Left cardiac atrium (tissue), 4 donors: ENCODE measurements at regions of chr7 and their contacts with region 1.

Region 1: GRCh38 chr7:92833024-92833765 is 3.2 kb downstream of the CDK6 start:
- DNase-seq: peak; percentile 89
- ATAC-seq: peak; percentile 74 to 81

Region 2: DNA sequence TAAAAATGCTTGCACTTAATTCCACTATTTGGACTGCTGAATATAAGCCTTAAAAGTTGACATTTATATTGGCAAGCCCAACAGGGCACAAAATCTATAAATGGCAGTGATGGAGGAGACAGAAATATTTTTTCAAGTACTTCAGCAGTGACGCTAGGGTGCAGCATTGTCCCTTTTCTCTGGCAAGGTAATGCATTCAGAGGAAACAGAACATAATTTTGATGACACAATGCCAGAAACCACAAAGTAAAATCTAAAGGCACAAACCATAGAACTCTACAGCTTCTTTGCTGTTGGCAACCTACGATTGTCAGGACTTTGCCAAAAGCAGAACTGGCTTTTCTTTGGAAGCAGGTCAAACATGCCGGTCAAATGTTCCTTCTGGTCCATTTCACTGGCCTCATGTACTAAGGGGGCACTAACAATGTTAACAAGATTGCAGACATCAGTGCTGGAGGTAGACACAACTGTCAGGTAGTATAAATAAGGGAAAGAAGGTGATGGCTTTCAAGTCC is 212.1 kb before region 1 on chr7:
- intact Hi-C with region 1: loop called (anchors 1 to 5 kb)
- DNase-seq: peak; percentile 71
- ATAC-seq: peak; percentile 86 to 91

Region 3: DNA sequence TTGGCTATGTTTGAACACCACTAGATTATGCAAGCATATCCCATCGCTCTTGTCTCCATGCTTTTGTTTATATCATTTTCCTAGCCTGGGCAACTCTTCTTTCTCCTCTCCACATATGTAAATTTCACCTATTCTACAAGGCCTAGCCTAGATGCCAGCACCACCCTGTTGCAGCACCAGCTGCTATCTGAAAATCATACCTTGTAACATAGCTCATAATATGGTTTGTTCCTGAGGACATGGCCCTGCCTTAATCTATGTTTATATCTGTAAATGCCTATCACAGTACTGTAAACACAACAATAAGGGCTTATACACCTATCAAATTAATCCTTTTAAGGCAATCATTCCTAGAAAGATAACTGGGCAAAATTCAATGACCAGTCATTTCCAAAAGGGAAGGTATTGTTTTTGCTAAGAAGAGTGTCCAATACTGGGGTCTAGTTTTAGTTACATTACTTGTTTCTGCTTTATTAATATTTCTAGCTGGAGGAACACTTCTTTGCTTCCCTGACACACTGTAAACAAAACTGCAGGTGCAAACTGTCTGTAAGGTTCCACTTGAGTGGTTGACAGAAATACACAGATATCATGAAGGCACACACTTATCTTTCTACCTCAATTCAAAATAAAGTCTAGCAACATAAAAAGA is 158.9 kb before region 1 on chr7:
- intact Hi-C with region 1: no loop called
- DNase-seq: no peak
- ATAC-seq: no peak

Region 4: GRCh38 chr7:92691578-92691977 is 141.6 kb before region 1 on chr7:
- intact Hi-C with region 1: loop called (anchors 2 to 10 kb)
- DNase-seq: no peak
- ATAC-seq: no peak

Region 5: DNA sequence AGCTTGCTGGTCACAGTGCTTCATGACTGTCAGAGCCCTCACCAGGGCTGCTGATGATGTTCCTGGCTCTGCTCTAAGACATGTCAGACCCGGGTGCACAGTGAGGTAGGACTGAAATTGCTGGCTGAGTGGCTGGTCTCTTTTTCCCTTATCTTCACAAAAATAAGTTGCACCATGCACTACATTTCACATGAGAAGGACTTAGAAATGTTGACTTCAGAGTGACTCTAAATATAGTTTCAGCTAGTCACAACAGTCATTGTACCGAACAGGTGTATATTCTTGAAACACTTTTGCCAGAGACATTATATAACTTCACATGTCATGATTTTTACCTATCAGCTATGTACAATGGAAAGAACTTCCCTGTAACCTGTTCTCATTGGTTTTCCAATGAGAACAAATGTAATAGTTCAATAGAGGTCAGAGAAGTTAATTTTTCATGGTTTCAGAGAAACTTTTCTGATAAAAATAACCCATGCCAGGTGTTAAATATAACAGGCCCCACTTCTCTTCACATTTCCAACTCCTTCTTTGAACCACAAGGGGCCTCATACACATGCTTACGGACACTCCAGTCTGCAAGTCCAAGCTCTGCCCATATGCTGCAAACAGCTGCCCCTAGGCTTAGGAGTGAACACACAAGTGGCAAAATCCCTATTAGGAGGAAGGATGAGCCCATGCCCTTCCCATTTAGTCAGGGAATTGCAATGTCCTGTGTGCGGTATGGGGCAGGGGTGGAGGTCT is 112.4 kb before region 1 on chr7:
- intact Hi-C with region 1: loop called in 1 of 2 experiments (anchors 10 kb)
- DNase-seq: no peak
- ATAC-seq: no peak

Region 6: GRCh38 chr7:92781117-92781720 is 52.0 kb before region 1 on chr7:
- intact Hi-C with region 1: loop called in 1 of 2 experiments (anchors 5 kb)
- DNase-seq: no peak
- ATAC-seq: peak; percentile 74 to 77

Region 7: GRCh38 chr7:92880212-92881090 is 47.3 kb after region 1 on chr7:
- intact Hi-C with region 1: no loop called
- DNase-seq: no peak
- ATAC-seq: peak; percentile 30 to 51

Region 8: GRCh38 chr7:93015779-93016481 is 182.7 kb after region 1 on chr7:
- intact Hi-C with region 1: no loop called
- DNase-seq: no peak
- ATAC-seq: peak in 1 of 2 donors; percentile 15

Region 9: GRCh38 chr7:93055543-93056107 is 222.4 kb after region 1 on chr7:
- intact Hi-C with region 1: loop called in 1 of 2 experiments (anchors 10 kb)
- DNase-seq: no peak
- ATAC-seq: peak; percentile 33 to 57